ENCODE measurements at regions of chr10 and their contacts with region 1.

Region 1: GRCh38 chr10:62594093-62594520 is 210.4 kb upstream of the ADO start:
- DNase-seq: peak; percentile 51 to 79 (median 58)
- ATAC-seq: peak in 3 of 4 donors; percentile 83 to 94 (median 86)
- H3K4me3 ChIP-seq: no peak overlapping the region
- H3K27ac ChIP-seq: no peak overlapping the region
- H3K4me1 ChIP-seq: peaks cover 0 to 5% (median 0%) of the 10 kb centered on the region in 12 donors
- H3K27me3 ChIP-seq: no peaks in the 10 kb centered on the region
- CTCF ChIP-seq: peak; percentile 71 to 91 (median 86)
- POLR2A ChIP-seq: no peak

Region 2: GRCh38 chr10:63083904-63084689 is 490.0 kb after region 1 on chr10:
- intact Hi-C with region 1: loop called (anchors 1 to 5 kb)
- DNase-seq: peak in 4 of 5 donors; percentile 53 to 74 (median 56)
- ATAC-seq: peak; percentile 64 to 94 (median 82)
- H3K4me3 ChIP-seq: no peak overlapping the region
- H3K27ac ChIP-seq: peak overlapping the region in 6 of 12 donors; percentile 6 to 54 (median 20)
- H3K4me1 ChIP-seq: peaks cover 0 to 14% (median 0%) of the 10 kb centered on the region in 12 donors
- H3K27me3 ChIP-seq: no peaks in the 10 kb centered on the region
- CTCF ChIP-seq: peak; percentile 52 to 78 (median 70)
- POLR2A ChIP-seq: no peak

Measured in heart left ventricle (tissue), 16 donors.